ENCODE measurements at regions of chr15 and their contacts with region 1.

Region 1: DNA sequence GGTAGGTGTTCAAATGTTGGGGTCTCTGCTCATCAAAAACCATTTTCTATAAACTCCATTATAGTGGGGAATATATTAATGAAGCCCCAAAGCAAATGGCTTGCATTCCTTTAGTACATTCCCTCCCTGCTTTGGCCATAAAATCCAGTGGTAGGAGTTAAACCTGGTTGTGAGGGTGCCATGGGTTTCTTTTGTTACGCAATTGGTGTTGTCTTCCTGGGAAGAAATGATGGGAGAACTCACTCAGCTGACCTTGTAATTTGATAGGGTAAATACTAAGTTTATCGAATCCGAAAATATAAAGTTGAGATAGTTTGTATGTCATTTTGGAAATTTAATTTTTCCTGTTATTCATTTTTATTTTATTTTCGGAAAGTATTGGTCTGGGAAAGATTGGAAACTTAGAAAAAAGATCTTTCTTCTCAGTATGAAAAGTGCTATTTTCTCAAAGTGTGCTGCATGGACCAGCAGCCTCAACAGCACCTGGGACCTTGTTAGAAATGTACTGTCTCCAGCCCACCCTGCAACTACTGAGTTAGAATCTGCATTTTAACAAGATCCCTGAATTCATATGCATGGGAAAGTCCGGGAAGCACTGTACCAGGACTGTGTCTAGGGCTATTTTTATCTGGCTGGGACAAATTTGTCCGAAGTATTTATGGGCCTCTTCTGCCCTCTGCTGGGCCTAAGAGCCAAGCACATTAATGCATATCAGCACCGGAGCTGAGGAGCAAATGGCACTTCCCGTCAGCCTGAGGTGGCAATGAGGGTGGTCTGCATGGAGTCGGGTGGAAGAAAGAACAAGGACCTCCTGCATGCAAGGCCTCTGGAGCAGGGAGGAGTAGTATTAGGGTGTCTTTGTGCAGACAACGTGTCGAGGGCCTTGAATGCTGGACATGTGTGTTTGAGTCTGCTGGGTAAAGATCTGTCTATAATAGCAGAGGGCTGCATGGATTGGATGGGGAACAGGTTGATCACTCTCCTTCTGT is 54.7 kb downstream of the FAM81A start:
- DNase-seq: peak in 1 of 2 experiments; percentile 54
- H3K4me3 ChIP-seq: no peak overlapping the region
- H3K27ac ChIP-seq: no peak overlapping the region
- H3K4me1 ChIP-seq: 0 out of 2 replicates have a peak, but pooled peaks cover 4% of the 10 kb centered on the region
- H3K27me3 ChIP-seq: no peaks in the 10 kb centered on the region
- CTCF ChIP-seq: peak; percentile 84

Region 2: GRCh38 chr15:58212909-58213526 is 1279.7 kb before region 1 on chr15:
- CTCF ChIA-PET with region 1: no interaction called
- POLR2A ChIA-PET with region 1: no interaction called
- intact Hi-C with region 1: loop called (anchors 2 kb)
- DNase-seq: no peak
- H3K4me3 ChIP-seq: no peak overlapping the region
- H3K27ac ChIP-seq: no peak overlapping the region
- H3K4me1 ChIP-seq: no peaks in the 10 kb centered on the region
- H3K27me3 ChIP-seq: no peaks in the 10 kb centered on the region
- CTCF ChIP-seq: peak; percentile 67

Region 3: GRCh38 chr15:59039225-59039624 is 453.5 kb before region 1 on chr15:
- CTCF ChIA-PET with region 1: no interaction called
- POLR2A ChIA-PET with region 1: no interaction called
- intact Hi-C with region 1: no loop called
- DNase-seq: no peak
- H3K4me3 ChIP-seq: no peak overlapping the region
- H3K27ac ChIP-seq: no peak overlapping the region
- H3K4me1 ChIP-seq: no peaks in the 10 kb centered on the region
- H3K27me3 ChIP-seq: no peaks in the 10 kb centered on the region
- CTCF ChIP-seq: no peak

Region 4: GRCh38 chr15:59160880-59161593 is 331.6 kb before region 1 on chr15:
- CTCF ChIA-PET with region 1: no interaction called
- POLR2A ChIA-PET with region 1: no interaction called
- intact Hi-C with region 1: loop called (anchors 1 kb)
- DNase-seq: peak in 1 of 2 experiments; percentile 29
- H3K4me3 ChIP-seq: no peak overlapping the region
- H3K27ac ChIP-seq: no peak overlapping the region
- H3K4me1 ChIP-seq: no peaks in the 10 kb centered on the region
- H3K27me3 ChIP-seq: no peaks in the 10 kb centered on the region
- CTCF ChIP-seq: peak; percentile 41

Region 5: GRCh38 chr15:59247364-59247763 is 245.3 kb before region 1 on chr15:
- CTCF ChIA-PET with region 1: no interaction called
- POLR2A ChIA-PET with region 1: no interaction called
- intact Hi-C with region 1: loop called (anchors 2 kb)
- DNase-seq: peak; percentile 42 to 48
- H3K4me3 ChIP-seq: no peak overlapping the region
- H3K27ac ChIP-seq: 0 out of 2 replicates have a peak overlapping the region, but pooled peaks have one; percentile 19
- H3K4me1 ChIP-seq: peaks cover 15% of the 10 kb centered on the region
- H3K27me3 ChIP-seq: no peaks in the 10 kb centered on the region
- CTCF ChIP-seq: peak; percentile 69

Region 6: DNA sequence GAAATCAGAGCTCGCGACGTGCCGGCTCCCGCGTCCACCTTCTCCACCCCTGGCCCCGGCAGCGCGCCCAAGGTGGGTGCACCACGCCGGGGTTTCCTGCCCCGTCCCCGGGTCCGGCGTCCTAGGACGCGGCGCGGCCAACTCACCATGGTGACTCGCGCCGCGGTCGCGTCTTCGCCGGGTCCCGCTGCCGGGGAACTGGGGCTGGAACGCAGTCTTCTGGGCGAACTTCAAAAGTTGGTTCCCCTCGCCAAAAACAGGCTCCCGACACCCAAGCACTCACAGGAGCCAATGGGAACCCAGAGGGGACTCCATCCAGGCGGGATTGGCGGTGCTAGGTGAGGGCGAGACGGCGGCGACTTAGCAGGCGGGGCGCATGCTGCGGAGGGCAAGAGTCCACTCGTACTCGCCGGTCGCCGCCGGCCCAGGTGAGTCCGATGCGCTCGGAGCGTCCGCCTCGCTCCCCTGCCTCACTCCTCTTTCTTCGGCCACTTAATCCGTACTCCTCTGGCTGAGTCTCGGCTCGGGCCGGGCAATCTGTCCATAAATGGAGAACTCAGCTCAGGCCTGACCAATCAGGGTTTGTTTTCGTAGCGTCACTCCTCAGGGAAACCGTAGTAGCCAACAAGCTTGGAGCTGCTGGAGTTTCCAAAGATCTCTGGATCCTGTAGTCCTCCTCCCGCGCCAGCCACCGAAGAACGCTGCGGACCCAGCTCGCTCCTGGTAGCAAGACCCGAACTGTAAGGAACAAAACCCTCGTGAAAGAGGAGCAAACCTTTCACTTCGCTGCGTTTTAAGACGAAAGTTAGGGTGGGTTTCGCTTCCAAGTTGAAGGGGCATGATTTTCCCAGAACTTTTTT is 120.1 kb before region 1 on chr15 and contains the start of gene MYO1E:
- CTCF ChIA-PET with region 1: no interaction called
- POLR2A ChIA-PET with region 1: no interaction called
- intact Hi-C with region 1: loop called (anchors 5 kb)
- DNase-seq: peak; percentile 91
- H3K4me3 ChIP-seq: peak within 1 kb of the TSS; percentile 97
- H3K27ac ChIP-seq: peak within 1 kb of the TSS; percentile 89
- H3K4me1 ChIP-seq: peaks cover 30% of the 10 kb centered on the region
- H3K27me3 ChIP-seq: no peaks in the 10 kb centered on the region
- CTCF ChIP-seq: no peak
- total RNA-seq, gene MYO1E: 156 and 213 TPM in 2 replicates

Measured in PC-9 (cell line).